Common myeloid progenitor, CD34-positive (primary cell): ENCODE measurements at regions of chr11 and their contacts with region 1.

Region 1: GRCh38 chr11:72814286-72815109 is at the start of gene ATG16L2:
- DNase-seq: peak; percentile 85 to 92 (median 89)
- H3K4me3 ChIP-seq: peak within 1 kb of the TSS; percentile 80 to 98 (median 88)
- H3K27ac ChIP-seq: peak within 1 kb of the TSS; percentile 97 to 99
- H3K4me1 ChIP-seq: peaks cover 9 to 64% (median 51%) of the 10 kb centered on the region in 4 experiments
- H3K27me3 ChIP-seq: no peaks in the 10 kb centered on the region

Region 2: GRCh38 chr11:72736452-72737069 is 77.9 kb before region 1 on chr11:
- CTCF ChIA-PET with region 1: interaction called, 7 read pairs
- POLR2A ChIA-PET with region 1: interaction called, 19 read pairs
- DNase-seq: peak; percentile 91 to 98 (median 97)
- H3K4me3 ChIP-seq: peak overlapping the region in 4 of 7 experiments; percentile 40 to 62 (median 52)
- H3K27ac ChIP-seq: peak overlapping the region; percentile 87 to 93
- H3K4me1 ChIP-seq: peaks cover 8 to 78% (median 65%) of the 10 kb centered on the region in 4 experiments
- H3K27me3 ChIP-seq: no peaks in the 10 kb centered on the region

Region 3: DNA sequence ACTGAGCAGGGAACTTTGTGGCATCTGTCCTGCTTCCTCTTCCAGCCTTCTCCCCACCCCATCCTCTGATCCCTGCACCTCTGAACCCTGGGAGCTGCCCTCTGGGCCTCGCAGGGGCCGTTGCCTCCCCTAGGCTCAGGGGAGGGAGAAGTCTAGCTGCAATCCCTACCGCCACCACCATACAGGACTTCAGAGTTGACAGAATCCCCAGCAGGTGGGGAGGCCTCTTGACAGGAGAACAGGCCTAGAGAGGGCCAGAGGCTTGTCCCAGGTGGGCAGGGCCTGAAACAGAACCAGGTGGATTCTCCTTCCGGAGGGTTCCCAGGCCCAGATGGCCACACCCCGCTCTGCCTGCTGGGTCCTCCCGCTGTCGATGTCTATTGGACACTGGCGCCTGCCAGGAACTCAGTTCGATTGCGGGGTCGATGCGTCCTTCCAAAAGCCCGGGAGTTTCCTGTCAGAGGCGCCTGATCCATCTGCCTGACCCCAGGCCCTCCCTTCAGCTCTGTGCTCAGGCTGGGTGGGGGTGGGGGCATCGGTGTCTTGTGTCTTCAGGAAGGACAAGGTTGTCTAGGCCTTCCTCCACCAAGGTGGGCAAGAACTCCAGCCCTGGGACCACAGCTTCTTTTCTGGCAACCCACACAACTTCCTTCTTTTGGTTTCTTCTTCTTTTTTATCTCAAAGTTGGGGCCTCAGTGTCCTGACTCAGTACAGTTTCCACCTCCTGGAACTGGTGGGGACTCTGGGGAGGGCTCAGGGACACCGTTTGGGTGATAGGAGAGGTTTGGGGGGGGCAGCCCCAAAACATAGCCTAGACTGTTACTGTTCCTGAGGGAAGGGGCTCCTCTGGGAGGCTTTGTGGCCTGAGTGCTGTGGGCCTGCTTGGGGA is 27.0 kb before region 1 on chr11:
- CTCF ChIA-PET with region 1: interaction called, 76 read pairs
- POLR2A ChIA-PET with region 1: interaction called, 36 read pairs
- DNase-seq: peak in 2 of 3 donors; percentile 80 to 83
- H3K4me3 ChIP-seq: peak overlapping the region in 4 of 7 experiments; percentile 9 to 48 (median 29)
- H3K27ac ChIP-seq: peak overlapping the region; percentile 12 to 76
- H3K4me1 ChIP-seq: peaks cover 1 to 36% (median 35%) of the 10 kb centered on the region in 4 experiments
- H3K27me3 ChIP-seq: no peaks in the 10 kb centered on the region